ENCODE measurements at regions of chrX and their contacts with region 1.

Region 1: GRCh38 chrX:136674270-136674985 is 26.5 kb downstream of the CD40LG start:
- DNase-seq: peak; percentile 79
- H3K4me3 Mint-ChIP-seq: peak overlapping the region; percentile 73
- H3K27ac Mint-ChIP-seq: peak overlapping the region; percentile 90
- H3K4me1 Mint-ChIP-seq: peaks cover 68% of the 10 kb centered on the region
- H3K27me3 Mint-ChIP-seq: no peaks in the 10 kb centered on the region

Region 2: GRCh38 chrX:136658151-136658550 is 16.3 kb before region 1 on chrX:
- intact Hi-C with region 1: loop called (anchors 1 kb)
- DNase-seq: peak; percentile 75
- H3K4me3 Mint-ChIP-seq: peak overlapping the region; percentile 98
- H3K27ac Mint-ChIP-seq: peak overlapping the region; percentile 98
- H3K4me1 Mint-ChIP-seq: peaks cover 70% of the 10 kb centered on the region
- H3K27me3 Mint-ChIP-seq: no peaks in the 10 kb centered on the region